ENCODE measurements at regions of chr2 and their contacts with region 1.

Region 1: DNA sequence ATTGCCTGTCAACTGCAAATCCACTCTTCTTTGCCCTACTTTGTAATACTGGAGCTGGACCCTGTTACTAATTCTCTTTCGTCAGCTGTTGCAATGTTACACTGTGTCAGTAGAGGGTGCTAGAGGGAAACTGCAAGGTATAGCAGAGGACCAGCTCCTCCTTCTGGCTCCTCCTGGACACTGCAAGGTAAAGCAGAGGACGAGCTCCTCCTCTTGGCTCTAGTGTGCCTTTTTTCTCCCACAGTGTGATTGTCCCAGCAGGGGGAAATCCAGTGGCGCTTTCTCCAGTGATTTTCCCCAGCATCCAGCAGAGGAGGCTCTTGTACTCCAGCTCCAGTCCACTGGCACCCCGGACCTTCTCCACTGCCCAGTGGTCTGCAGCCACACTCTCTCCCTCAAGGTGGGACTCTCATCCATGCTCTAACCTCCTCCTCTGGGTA is 95.6 kb downstream of the CAPN13 start:
- DNase-seq: peak; percentile 80 to 94
- ATAC-seq: peak; percentile 66 to 87
- H3K4me3 ChIP-seq: no peak overlapping the region
- H3K27ac ChIP-seq: no peak overlapping the region
- H3K4me1 ChIP-seq: no peaks in the 10 kb centered on the region
- CTCF ChIP-seq: peak; percentile 100
- EP300 ChIP-seq: no peak
- POLR2A ChIP-seq: no peak
- RAD21 ChIP-seq: peak; percentile 91 to 99

Region 2: DNA sequence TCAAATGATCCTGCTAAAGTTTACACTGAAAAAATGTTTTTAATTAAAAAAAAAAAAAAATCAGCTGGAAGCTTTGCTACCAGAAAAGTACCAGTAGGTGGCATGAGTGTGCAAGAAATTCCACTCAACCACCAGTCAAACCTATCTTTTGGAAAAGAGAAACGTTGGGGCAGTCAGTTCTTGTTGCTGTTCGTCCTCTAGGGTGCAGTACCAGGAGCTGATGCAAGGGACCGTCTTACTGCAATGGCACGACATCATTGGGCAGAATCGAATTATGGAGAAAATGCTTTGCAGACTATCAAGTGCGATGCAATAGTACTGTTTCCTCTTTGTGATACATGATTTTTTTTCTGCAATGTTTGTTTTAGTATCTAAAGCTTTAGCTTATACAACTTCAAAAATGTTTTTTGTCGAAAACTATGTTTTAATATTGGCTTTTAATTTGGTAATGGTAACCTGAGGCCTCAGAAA is 546.6 kb before region 1 on chr2:
- CTCF ChIA-PET with region 1: interaction called, 460 read pairs
- POLR2A ChIA-PET with region 1: interaction called, 12 read pairs
- DNase-seq: peak; percentile 96
- ATAC-seq: peak; percentile 95 to 99
- H3K4me3 ChIP-seq: no peak overlapping the region
- H3K27ac ChIP-seq: no peak overlapping the region
- H3K4me1 ChIP-seq: no peaks in the 10 kb centered on the region
- CTCF ChIP-seq: peak; percentile 100
- EP300 ChIP-seq: no peak
- POLR2A ChIP-seq: no peak
- RAD21 ChIP-seq: peak; percentile 97 to 98

Region 3: GRCh38 chr2:30217644-30218337 is 493.9 kb before region 1 on chr2:
- CTCF ChIA-PET with region 1: interaction called, 430 read pairs
- POLR2A ChIA-PET with region 1: no interaction called
- DNase-seq: no peak
- ATAC-seq: no peak
- H3K4me3 ChIP-seq: no peak overlapping the region
- H3K27ac ChIP-seq: no peak overlapping the region
- H3K4me1 ChIP-seq: no peaks in the 10 kb centered on the region; the same call in 2 of the 3 replicates
- CTCF ChIP-seq: no peak
- EP300 ChIP-seq: no peak
- POLR2A ChIP-seq: no peak
- RAD21 ChIP-seq: no peak

Region 4: DNA sequence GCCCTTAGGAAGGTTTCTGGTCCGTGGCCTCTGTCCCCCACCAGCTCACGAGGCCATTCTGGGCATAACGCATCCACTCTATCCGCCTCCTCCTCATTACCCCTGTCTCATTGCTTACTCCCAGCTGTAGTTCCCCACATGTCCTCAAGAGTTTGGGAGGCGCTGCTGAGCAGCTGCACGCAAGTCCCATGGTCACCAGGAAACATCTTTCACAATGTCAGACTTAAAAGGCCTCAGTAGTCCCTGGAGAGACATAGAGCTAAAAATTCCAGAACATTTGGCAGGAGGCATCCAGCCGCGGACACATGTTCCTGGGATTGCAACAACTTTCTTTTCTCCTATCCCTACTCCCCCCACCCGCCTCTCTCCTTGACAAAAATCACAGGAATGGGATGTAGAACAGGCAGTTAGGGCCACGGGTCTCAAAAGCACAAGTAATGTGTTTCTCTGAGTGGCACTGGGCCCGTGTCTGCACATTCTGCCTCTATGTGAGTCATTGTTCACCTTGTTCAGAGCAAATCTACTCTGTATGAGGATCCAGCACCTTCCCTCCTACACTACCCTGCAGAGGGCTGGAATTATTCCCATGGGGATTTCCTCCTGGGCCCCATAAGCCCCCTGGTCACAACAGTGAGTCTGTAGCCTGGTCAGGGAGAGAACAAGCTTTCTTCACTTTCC is 472.2 kb before region 1 on chr2:
- CTCF ChIA-PET with region 1: interaction called, 25 read pairs
- POLR2A ChIA-PET with region 1: no interaction called
- DNase-seq: peak; percentile 87 to 89
- ATAC-seq: peak; percentile 70 to 79
- H3K4me3 ChIP-seq: no peak overlapping the region
- H3K27ac ChIP-seq: peak overlapping the region; percentile 24 to 92; a peak in 4 of 6 replicates
- H3K4me1 ChIP-seq: peaks cover 99% of the 10 kb centered on the region
- CTCF ChIP-seq: peak; percentile 83
- EP300 ChIP-seq: no peak
- POLR2A ChIP-seq: no peak
- RAD21 ChIP-seq: peak; percentile 68 to 76

Region 5: GRCh38 chr2:30470426-30470825 is 241.2 kb before region 1 on chr2:
- CTCF ChIA-PET with region 1: no interaction called
- POLR2A ChIA-PET with region 1: no interaction called
- DNase-seq: no peak
- ATAC-seq: no peak
- H3K4me3 ChIP-seq: no peak overlapping the region
- H3K27ac ChIP-seq: no peak overlapping the region
- H3K4me1 ChIP-seq: peaks cover 30% of the 10 kb centered on the region
- CTCF ChIP-seq: no peak
- EP300 ChIP-seq: no peak
- POLR2A ChIP-seq: no peak
- RAD21 ChIP-seq: no peak

Region 6: GRCh38 chr2:30730736-30731647 is 19.3 kb after region 1 on chr2:
- CTCF ChIA-PET with region 1: interaction called, 72 read pairs
- POLR2A ChIA-PET with region 1: no interaction called
- DNase-seq: no peak
- ATAC-seq: no peak; a peak in 1 of 6 replicates
- H3K4me3 ChIP-seq: no peak overlapping the region
- H3K27ac ChIP-seq: no peak overlapping the region
- H3K4me1 ChIP-seq: no peaks in the 10 kb centered on the region
- CTCF ChIP-seq: no peak
- EP300 ChIP-seq: no peak
- POLR2A ChIP-seq: no peak
- RAD21 ChIP-seq: no peak

Region 7: GRCh38 chr2:30776831-30777635 is 65.4 kb after region 1 on chr2:
- CTCF ChIA-PET with region 1: no interaction called
- POLR2A ChIA-PET with region 1: no interaction called
- DNase-seq: no peak
- ATAC-seq: peak in 1 of 2 experiments; percentile 51; a peak in 3 of 6 replicates
- H3K4me3 ChIP-seq: no peak overlapping the region
- H3K27ac ChIP-seq: no peak overlapping the region
- H3K4me1 ChIP-seq: no peaks in the 10 kb centered on the region
- CTCF ChIP-seq: no peak
- EP300 ChIP-seq: no peak
- POLR2A ChIP-seq: no peak
- RAD21 ChIP-seq: no peak

Region 8: GRCh38 chr2:31333527-31334183 is 622.0 kb after region 1 on chr2:
- CTCF ChIA-PET with region 1: interaction called, 92 read pairs
- POLR2A ChIA-PET with region 1: no interaction called
- DNase-seq: peak; percentile 74 to 80
- ATAC-seq: peak; percentile 85 to 92
- H3K4me3 ChIP-seq: no peak overlapping the region
- H3K27ac ChIP-seq: peak overlapping the region in 1 of 2 experiments; percentile 5; a peak in 1 of 6 replicates
- H3K4me1 ChIP-seq: no peaks in the 10 kb centered on the region
- CTCF ChIP-seq: peak; percentile 97
- EP300 ChIP-seq: no peak
- POLR2A ChIP-seq: no peak
- RAD21 ChIP-seq: peak; percentile 97 to 98

Measured in A549 (cell line).